Caco-2 (cell line): ENCODE measurements at regions of chr10 and their contacts with region 1.

Region 1: DNA sequence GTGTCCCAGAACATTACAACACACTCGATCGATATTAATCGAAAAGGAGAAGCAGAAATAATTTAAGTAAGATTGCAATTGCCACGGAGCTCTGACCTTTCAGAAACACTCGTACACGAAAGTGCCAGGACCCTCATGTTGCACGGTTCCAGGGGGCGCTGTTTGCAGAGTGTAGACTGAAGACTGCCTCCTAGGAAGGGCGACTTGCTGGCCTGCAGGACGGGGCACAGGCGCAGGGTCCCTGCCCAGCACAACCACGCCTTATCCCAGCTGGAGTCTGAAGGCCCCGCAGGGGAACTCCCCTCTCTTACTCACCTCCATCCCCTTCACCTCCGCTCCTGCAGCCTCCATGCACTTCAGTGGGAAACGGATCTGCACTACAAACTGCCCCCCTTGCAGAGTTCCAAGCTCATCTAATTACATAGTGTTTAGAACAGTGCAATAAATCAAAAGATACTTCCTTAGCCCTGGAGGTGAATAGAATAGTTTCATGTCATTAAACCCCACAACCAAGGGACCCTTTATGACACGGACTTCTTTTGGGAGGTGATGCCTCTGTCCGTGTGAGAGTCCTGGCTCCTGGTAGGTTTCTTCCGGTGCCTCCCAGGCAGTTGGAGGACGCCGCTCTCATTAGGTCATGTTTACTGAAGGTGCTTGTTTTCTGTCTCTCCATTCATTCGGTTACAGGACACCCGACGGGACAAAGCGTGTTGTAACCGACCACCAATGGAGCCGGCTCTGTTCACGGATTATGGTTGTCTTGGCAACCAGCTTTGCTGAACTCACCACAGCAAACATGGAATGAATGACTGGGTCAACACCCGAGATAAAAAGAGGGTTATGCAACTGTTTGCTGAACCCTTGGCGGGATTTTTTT is 262.2 kb downstream of the BAMBI start:
- DNase-seq: peak; percentile 99 to 100
- H3K4me3 ChIP-seq: peak overlapping the region; percentile 35
- H3K4me3 Mint-ChIP-seq: peak overlapping the region; percentile 75
- H3K27ac Mint-ChIP-seq: peak overlapping the region; percentile 88
- H3K4me1 ChIP-seq: peaks cover 30% of the 10 kb centered on the region
- H3K4me1 Mint-ChIP-seq: peaks cover 45% of the 10 kb centered on the region
- H3K27me3 ChIP-seq: no peaks in the 10 kb centered on the region
- H3K27me3 Mint-ChIP-seq: no peaks in the 10 kb centered on the region
- CTCF ChIP-seq: peak; percentile 90 to 97

Region 2: GRCh38 chr10:28663576-28664313 is 275.8 kb before region 1 on chr10:
- CTCF ChIA-PET with region 1: interaction called, 12 read pairs
- POLR2A ChIA-PET with region 1: no interaction called
- intact Hi-C with region 1: loop called (anchors 5 kb)
- DNase-seq: peak; percentile 88 to 90
- H3K4me3 ChIP-seq: no peak overlapping the region
- H3K4me3 Mint-ChIP-seq: no peak overlapping the region
- H3K27ac Mint-ChIP-seq: no peak overlapping the region
- H3K4me1 ChIP-seq: peaks cover 12% of the 10 kb centered on the region
- H3K4me1 Mint-ChIP-seq: peaks cover 34% of the 10 kb centered on the region
- H3K27me3 ChIP-seq: no peaks in the 10 kb centered on the region
- H3K27me3 Mint-ChIP-seq: peaks cover 3% of the 10 kb centered on the region
- CTCF ChIP-seq: peak; percentile 99

Region 3: GRCh38 chr10:28883741-28884437 is 55.6 kb before region 1 on chr10:
- CTCF ChIA-PET with region 1: interaction called, 3 read pairs
- POLR2A ChIA-PET with region 1: no interaction called
- intact Hi-C with region 1: loop called (anchors 1 kb)
- DNase-seq: no peak
- H3K4me3 ChIP-seq: no peak overlapping the region
- H3K4me3 Mint-ChIP-seq: no peak overlapping the region
- H3K27ac Mint-ChIP-seq: peak overlapping the region; percentile 35
- H3K4me1 ChIP-seq: peaks cover 44% of the 10 kb centered on the region
- H3K4me1 Mint-ChIP-seq: peaks cover 52% of the 10 kb centered on the region
- H3K27me3 ChIP-seq: no peaks in the 10 kb centered on the region
- H3K27me3 Mint-ChIP-seq: no peaks in the 10 kb centered on the region
- CTCF ChIP-seq: no peak

Region 4: DNA sequence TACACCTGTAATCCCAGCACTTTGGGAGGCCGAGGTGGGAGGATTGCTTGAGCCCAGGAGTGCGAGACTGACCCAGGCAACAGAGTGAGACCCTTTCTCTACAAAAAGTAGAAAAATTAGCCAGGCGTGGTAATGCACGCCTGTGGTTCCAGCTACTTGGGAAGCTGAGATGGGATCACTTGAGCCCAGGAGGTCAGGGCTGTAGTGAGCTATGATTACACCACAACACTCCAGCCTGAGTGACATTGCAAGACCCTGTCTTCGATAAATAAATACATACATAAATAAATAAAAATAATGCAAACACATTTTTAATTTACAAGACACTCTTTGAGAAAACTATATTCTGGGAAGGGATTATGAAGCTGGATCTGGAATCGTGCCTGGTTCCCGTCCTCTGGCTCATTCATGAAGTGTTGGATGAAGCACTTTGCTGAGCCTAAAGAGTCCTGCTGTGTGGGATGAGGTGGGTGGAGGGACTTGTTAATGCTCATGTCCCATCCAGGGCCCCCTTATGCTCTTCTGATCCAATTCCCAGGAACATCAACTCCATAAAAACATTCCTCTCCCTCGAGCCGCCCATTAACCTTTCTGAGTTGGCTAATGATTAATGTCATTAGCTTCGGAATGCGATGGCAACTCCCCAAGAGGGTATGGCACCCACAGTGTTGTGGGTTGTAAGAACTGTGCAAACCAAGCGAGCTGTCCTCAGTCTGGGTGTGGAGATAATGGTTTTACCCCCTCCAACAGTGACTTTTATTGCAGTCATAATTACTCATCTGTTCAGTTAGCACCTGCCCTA is 25.9 kb before region 1 on chr10:
- CTCF ChIA-PET with region 1: interaction called, 9 read pairs
- POLR2A ChIA-PET with region 1: interaction called, 9 read pairs
- intact Hi-C with region 1: loop called (anchors 1 kb)
- DNase-seq: peak; percentile 70 to 89
- H3K4me3 ChIP-seq: no peak overlapping the region
- H3K4me3 Mint-ChIP-seq: peak overlapping the region; percentile 25
- H3K27ac Mint-ChIP-seq: peak overlapping the region; percentile 83
- H3K4me1 ChIP-seq: peaks cover 41% of the 10 kb centered on the region
- H3K4me1 Mint-ChIP-seq: peaks cover 45% of the 10 kb centered on the region
- H3K27me3 ChIP-seq: no peaks in the 10 kb centered on the region
- H3K27me3 Mint-ChIP-seq: no peaks in the 10 kb centered on the region
- CTCF ChIP-seq: no peak

Region 5: GRCh38 chr10:29105531-29106215 is 166.2 kb after region 1 on chr10:
- CTCF ChIA-PET with region 1: interaction called, 3 read pairs
- POLR2A ChIA-PET with region 1: no interaction called
- intact Hi-C with region 1: loop called (anchors 1 kb)
- DNase-seq: peak; percentile 50 to 55
- H3K4me3 ChIP-seq: no peak overlapping the region
- H3K4me3 Mint-ChIP-seq: peak overlapping the region; percentile 64
- H3K27ac Mint-ChIP-seq: peak overlapping the region; percentile 88
- H3K4me1 ChIP-seq: peaks cover 80% of the 10 kb centered on the region
- H3K4me1 Mint-ChIP-seq: peaks cover 70% of the 10 kb centered on the region
- H3K27me3 ChIP-seq: no peaks in the 10 kb centered on the region
- H3K27me3 Mint-ChIP-seq: no peaks in the 10 kb centered on the region
- CTCF ChIP-seq: no peak

Region 6: GRCh38 chr10:29141063-29141462 is 201.5 kb after region 1 on chr10:
- CTCF ChIA-PET with region 1: no interaction called
- POLR2A ChIA-PET with region 1: no interaction called
- intact Hi-C with region 1: no loop called
- DNase-seq: no peak
- H3K4me3 ChIP-seq: no peak overlapping the region
- H3K4me3 Mint-ChIP-seq: peak overlapping the region; percentile 6
- H3K27ac Mint-ChIP-seq: peak overlapping the region; percentile 90
- H3K4me1 ChIP-seq: peaks cover 32% of the 10 kb centered on the region
- H3K4me1 Mint-ChIP-seq: peaks cover 37% of the 10 kb centered on the region
- H3K27me3 ChIP-seq: no peaks in the 10 kb centered on the region
- H3K27me3 Mint-ChIP-seq: no peaks in the 10 kb centered on the region
- CTCF ChIP-seq: no peak

Region 7: DNA sequence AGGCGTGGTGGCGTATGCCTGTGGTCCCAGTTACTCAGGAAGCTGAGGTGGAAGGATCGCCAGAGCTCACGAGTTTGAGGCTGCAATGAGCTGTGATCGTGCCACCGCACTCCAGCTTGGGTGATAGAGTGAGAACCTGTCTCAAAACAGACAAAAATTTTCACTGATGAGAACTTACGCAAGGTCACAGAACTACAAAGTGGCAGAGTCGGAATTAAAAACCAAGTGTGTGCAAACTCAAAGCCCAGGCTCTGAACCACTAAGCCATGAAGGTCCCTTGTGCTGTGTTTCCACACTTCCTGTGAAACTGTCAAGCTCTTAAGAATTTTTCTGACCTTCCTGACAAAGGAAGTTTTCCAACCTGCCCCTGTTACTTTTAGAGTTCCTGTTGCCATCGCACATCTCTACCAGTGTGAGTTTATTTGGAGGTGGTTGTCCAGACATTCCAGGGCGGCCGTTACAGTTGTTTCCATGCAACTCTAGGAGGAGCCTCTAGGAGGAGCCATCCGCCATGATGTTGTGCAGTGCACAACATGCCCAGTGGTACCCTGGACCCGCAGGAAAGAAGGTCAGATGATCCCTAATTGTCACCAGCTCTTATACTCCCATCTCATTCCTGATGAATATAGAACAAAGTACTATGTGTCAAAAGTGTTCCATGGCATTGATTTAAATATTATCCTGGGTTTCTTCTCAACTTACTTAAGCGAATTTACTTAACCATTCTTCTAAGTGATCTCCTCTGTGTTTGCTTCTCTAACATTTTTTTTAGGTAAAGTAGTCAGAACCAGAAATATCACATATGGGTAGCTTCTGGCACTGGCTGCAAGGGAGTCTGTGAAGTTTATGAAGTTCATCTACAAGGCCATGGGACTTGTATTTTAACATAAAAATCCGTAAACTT is 300.3 kb after region 1 on chr10:
- CTCF ChIA-PET with region 1: no interaction called
- POLR2A ChIA-PET with region 1: no interaction called
- intact Hi-C with region 1: loop called (anchors 1 kb)
- DNase-seq: peak; percentile 74 to 78
- H3K4me3 ChIP-seq: no peak overlapping the region
- H3K4me3 Mint-ChIP-seq: no peak overlapping the region
- H3K27ac Mint-ChIP-seq: peak overlapping the region; percentile 55
- H3K4me1 ChIP-seq: peaks cover 45% of the 10 kb centered on the region
- H3K4me1 Mint-ChIP-seq: peaks cover 28% of the 10 kb centered on the region
- H3K27me3 ChIP-seq: no peaks in the 10 kb centered on the region
- H3K27me3 Mint-ChIP-seq: no peaks in the 10 kb centered on the region
- CTCF ChIP-seq: peak; percentile 79 to 87